Activated CD4-positive, alpha-beta T cell treated with anti-CD3 and anti-CD28 coated beads, Interleukin-2, amount 10 ng/mL, durations not matched to agents 24 days and 14 days (primary cell): ENCODE measurements at regions of chr20 and their contacts with region 1.

Region 1: GRCh38 chr20:33443512-33444239 is at the start of gene SNTA1:
- DNase-seq: peak; percentile 96
- H3K4me3 Mint-ChIP-seq: peak within 1 kb of the TSS; percentile 91
- H3K27ac Mint-ChIP-seq: peak within 1 kb of the TSS; percentile 72
- H3K4me1 Mint-ChIP-seq: peaks cover 16% of the 10 kb centered on the region
- H3K27me3 Mint-ChIP-seq: peaks cover 13% of the 10 kb centered on the region
- total RNA-seq, gene SNTA1: 0.91 and 1.0 TPM in 2 replicates

Region 2: DNA sequence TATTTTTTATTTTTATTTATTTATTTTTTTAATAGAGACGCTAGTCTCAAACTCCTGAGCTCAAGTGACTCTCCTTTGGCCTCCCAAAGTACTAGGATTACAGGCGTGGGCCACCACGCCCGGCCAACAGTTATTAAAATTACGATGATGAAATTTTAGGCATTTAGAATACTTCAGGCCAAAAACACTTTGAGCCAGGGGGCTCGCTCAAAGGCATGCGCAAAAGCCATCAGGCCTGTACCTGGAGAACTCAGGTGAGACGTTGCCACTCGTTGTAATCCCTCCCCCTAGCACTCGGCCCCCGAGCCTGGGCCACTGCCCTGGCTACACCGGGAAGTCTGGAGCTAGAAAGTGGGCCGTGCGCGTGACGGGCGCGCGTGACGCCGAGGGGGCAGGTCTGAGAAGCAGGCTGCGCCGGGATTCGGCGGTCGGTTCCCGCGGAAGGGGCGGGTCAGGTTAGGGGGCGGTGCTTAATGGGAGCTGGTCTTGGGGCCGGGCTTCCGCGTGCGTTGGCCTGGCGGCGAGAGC is 45.9 kb after region 1 on chr20:
- intact Hi-C with region 1: loop called (anchors 1 kb)
- DNase-seq: peak; percentile 100
- H3K4me3 Mint-ChIP-seq: peak overlapping the region; percentile 87
- H3K27ac Mint-ChIP-seq: peak overlapping the region; percentile 92
- H3K4me1 Mint-ChIP-seq: peaks cover 8% of the 10 kb centered on the region
- H3K27me3 Mint-ChIP-seq: no peaks in the 10 kb centered on the region